GM12878 (cell line): ENCODE measurements at regions of chr14 and their contacts with region 1.

Region 1: DNA sequence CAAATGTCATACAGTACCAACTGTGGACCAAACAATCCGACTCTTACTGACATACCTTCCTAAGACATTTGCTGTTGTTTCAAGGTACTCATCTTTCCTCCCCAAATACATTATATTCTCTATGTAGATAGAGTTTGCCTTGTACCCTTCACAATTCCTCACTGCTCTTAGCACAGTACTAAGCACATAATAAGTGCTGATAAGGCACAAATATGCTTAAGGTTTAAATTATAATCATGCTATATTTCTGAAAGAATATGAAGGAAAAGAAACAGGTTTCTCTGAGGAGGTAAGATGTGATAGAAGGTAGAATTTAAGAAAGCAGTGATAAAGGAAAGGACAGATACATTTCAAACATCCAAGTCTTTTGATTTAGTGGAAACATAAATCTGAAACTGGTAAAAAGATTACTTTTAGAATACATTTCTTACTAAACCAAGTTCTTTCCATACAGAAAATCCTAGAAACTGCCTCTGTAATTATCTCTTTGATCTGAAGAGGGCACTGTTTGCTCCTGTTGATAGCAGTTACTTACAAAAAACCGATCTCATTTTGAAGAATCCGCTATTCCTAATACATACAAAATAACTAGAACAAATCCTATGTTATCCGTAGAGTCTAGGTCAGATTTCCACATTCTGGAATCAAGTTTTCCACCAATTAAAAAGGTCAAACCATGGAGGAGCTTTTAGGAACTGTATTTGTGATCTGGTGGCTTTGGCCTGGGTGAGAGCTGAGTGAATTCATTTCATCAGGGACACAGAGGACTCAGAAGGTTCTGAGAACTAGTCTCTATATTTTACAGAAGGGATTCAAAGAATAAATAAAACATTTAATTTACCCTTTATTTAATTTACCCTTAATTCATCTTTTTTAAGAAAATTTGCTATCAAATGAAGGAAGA is 311.9 kb downstream of the DAD1 start:
- DNase-seq: no peak
- ATAC-seq: 0 out of 3 replicates have a peak, but pooled peaks have one; percentile 31
- H3K4me3 ChIP-seq: no peak overlapping the region
- H3K27ac ChIP-seq: no peak overlapping the region
- H3K4me1 ChIP-seq: no peaks in the 10 kb centered on the region
- H3K27me3 ChIP-seq: peaks cover 0 to 5% of the 10 kb centered on the region in 2 experiments; a peak in 3 of 4 replicates
- CTCF ChIP-seq: peak; percentile 53 to 69 (median 56)
- EP300 ChIP-seq: no peak
- POLR2A ChIP-seq: no peak
- RAD21 ChIP-seq: peak; percentile 49

Region 2: GRCh38 chr14:22252686-22253085 is 24.5 kb before region 1 on chr14:
- CTCF ChIA-PET with region 1: interaction called, 14 read pairs
- POLR2A ChIA-PET with region 1: no interaction called
- RAD21 ChIA-PET with region 1: no interaction called
- SMC1A ChIA-PET with region 1: interaction called, 3 read pairs
- in situ Hi-C with region 1: no loop called
- intact Hi-C with region 1: no loop called
- DNase-seq: no peak
- ATAC-seq: no peak
- H3K4me3 ChIP-seq: no peak overlapping the region
- H3K27ac ChIP-seq: no peak overlapping the region
- H3K4me1 ChIP-seq: no peaks in the 10 kb centered on the region
- H3K27me3 ChIP-seq: no peaks in the 10 kb centered on the region
- CTCF ChIP-seq: no peak
- EP300 ChIP-seq: no peak
- POLR2A ChIP-seq: no peak
- RAD21 ChIP-seq: no peak

Region 3: DNA sequence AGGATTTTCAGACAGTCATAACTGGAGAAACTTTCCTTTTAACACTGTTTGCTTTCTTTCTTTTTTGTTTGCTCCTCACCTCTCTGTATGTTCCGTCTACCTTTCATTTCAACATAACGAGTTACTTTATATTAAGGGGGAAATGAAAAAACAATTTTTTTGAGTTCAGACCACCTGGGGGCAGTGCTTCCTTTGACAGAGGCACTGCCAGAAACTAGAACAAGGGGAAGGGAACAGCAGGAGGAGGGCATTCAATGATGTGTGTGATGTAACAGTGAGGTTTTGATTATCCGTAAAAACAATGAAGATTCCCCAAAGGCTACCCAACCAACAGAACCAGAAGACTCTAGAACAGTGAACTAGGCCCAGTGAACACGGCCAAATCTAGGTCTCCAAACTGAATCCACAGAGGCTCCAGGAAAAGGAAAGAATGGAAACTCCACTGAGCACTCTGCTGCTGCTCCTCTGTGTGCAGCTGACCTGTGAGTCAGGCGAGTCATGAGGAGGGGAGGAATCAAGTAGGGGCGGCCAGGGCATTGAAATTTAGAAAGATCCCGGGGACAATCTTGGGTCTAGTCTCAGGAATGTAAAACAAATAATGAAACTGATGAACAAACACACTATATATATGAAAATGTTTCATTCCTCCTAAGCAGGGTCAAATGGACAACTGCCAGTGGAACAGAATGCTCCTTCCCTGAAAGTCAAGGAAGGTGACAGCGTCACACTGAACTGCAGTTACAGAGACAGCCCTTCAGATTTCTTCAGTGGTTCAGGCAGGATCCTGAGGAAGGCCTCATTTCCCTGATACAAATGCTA is 11.6 kb before region 1 on chr14:
- CTCF ChIA-PET with region 1: interaction called, 44 read pairs
- POLR2A ChIA-PET with region 1: interaction called, 3 read pairs
- RAD21 ChIA-PET with region 1: interaction called, 3 read pairs
- SMC1A ChIA-PET with region 1: interaction called, 7 read pairs
- in situ Hi-C with region 1: no loop called
- intact Hi-C with region 1: no loop called
- DNase-seq: no peak
- ATAC-seq: peak; percentile 57
- H3K4me3 ChIP-seq: no peak overlapping the region
- H3K27ac ChIP-seq: no peak overlapping the region
- H3K4me1 ChIP-seq: no peaks in the 10 kb centered on the region; the same call in 1 of the 2 replicates
- H3K27me3 ChIP-seq: no peaks in the 10 kb centered on the region
- CTCF ChIP-seq: peak in 1 of 3 experiments; percentile 19; a peak in 2 of 6 replicates
- EP300 ChIP-seq: no peak
- POLR2A ChIP-seq: no peak
- RAD21 ChIP-seq: peak; percentile 32

Region 4: DNA sequence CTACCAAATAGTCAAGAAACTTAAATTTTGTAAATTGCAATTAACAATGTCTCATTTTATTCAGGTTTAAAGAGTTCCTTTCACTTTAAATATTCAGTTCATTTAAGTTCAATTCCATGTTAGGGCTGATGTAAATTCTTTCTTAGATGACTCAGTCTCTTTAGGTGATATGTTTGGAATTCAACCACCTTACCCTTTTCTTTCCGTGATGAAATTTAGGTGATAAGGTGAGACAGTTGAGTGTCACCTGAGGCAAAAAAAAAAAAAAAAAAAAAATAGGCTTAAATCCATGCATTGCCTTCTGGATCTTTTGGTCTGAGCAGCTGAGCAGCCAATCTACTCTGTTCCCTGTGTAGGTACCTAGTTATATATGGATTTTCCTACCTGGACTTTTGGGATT is 12.4 kb after region 1 on chr14:
- CTCF ChIA-PET with region 1: interaction called, 31 read pairs
- POLR2A ChIA-PET with region 1: no interaction called
- RAD21 ChIA-PET with region 1: interaction called, 4 read pairs
- SMC1A ChIA-PET with region 1: interaction called, 5 read pairs
- in situ Hi-C with region 1: no loop called
- intact Hi-C with region 1: no loop called
- DNase-seq: no peak
- ATAC-seq: no peak
- H3K4me3 ChIP-seq: no peak overlapping the region
- H3K27ac ChIP-seq: no peak overlapping the region
- H3K4me1 ChIP-seq: no peaks in the 10 kb centered on the region
- H3K27me3 ChIP-seq: no peaks in the 10 kb centered on the region
- CTCF ChIP-seq: no peak
- EP300 ChIP-seq: no peak
- POLR2A ChIP-seq: no peak
- RAD21 ChIP-seq: no peak

Region 5: DNA sequence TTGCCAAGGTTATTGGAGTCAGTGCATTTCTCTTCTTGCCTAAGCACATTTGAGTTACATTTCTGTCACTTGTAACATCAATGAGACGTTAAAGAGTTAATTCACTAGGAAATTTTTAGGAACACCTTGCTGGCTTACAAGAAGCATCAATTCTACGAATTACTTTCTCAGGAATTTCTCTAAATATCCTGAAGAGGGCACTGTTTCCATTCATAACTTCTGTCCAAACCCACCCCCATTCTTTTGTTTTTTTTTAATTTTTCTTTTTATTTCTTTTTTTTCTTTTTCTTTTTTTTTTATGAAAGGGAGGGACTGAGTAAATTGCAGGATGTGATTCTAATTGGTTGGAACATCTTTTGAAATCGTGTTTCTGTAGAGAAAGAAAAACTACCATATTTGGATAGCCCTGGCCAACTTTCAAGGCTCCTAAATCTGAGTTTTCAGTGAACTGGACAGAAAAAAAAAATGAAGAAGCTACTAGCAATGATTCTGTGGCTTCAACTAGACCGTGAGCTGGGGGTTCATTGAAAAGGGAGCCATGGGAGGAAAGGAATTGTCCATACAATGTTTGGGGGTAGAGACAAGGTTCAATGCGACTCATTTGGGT is 26.5 kb after region 1 on chr14:
- CTCF ChIA-PET with region 1: interaction called, 39 read pairs
- POLR2A ChIA-PET with region 1: no interaction called
- RAD21 ChIA-PET with region 1: interaction called, 6 read pairs
- SMC1A ChIA-PET with region 1: interaction called, 8 read pairs
- in situ Hi-C with region 1: no loop called
- intact Hi-C with region 1: no loop called
- DNase-seq: no peak
- ATAC-seq: no peak
- H3K4me3 ChIP-seq: no peak overlapping the region
- H3K27ac ChIP-seq: no peak overlapping the region
- H3K4me1 ChIP-seq: no peaks in the 10 kb centered on the region
- H3K27me3 ChIP-seq: 0 out of 4 replicates have a peak, but pooled peaks cover 0 to 5% of the 10 kb centered on the region in 2 experiments
- CTCF ChIP-seq: peak; percentile 39 to 48 (median 44); a peak in 4 of 6 replicates
- EP300 ChIP-seq: no peak
- POLR2A ChIP-seq: no peak
- RAD21 ChIP-seq: peak; percentile 61